CD4-positive, alpha-beta T cell (primary cell): ENCODE measurements at regions of chr5 and their contacts with region 1.

Region 1: DNA sequence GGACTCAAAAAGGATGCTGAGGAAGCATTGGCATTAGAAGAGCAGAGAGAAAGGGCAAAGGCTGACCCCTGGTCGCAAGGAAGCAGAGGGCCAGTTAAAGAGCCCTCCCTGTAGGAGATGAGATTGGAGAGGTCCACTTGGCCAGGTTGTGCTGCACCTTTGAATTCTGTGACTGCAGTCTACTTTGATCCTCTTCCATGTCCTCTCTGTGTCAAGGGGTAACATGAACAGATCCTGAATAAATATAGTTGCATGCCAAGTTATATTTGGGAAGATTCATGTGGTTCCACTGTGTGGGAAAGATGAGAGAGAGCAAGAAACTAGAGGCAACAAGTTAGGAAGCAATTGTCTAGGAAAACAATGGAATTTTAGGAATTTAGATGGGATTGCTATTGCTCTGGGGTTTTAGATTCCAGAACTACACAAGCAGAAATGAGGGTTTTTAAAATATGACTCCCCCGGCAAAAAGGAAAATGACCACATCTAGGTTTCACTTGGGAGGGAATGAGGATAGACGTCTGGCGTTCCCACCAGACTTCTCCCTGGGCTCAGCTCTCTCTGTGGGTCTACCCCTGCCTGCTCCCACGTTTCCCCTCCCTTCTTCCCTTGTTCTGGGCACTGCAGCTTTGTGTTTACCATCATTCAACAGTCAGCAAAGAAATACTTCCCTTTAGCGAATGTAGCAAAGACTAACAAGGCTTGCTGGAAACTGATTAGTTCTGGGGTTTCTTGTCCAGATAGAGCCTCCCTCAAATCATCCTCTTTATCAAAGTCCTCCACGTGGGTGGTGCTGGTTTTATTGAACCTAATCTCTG is 63.6 kb downstream of the SNX18 start:
- DNase-seq: no peak
- ATAC-seq: no peak
- H3K4me3 ChIP-seq: no peak overlapping the region
- H3K4me3 Mint-ChIP-seq: no peak overlapping the region
- H3K27ac ChIP-seq: no peak overlapping the region
- H3K27ac Mint-ChIP-seq: no peak overlapping the region
- H3K4me1 ChIP-seq: peaks cover 2% of the 10 kb centered on the region
- H3K4me1 Mint-ChIP-seq: peaks cover 4% of the 10 kb centered on the region
- H3K27me3 ChIP-seq: no peaks in the 10 kb centered on the region
- H3K27me3 Mint-ChIP-seq: no peaks in the 10 kb centered on the region
- CTCF ChIP-seq: no peak

Region 2: GRCh38 chr5:54673523-54674225 is 92.5 kb after region 1 on chr5:
- CTCF ChIA-PET with region 1: no interaction called
- POLR2A ChIA-PET with region 1: no interaction called
- intact Hi-C with region 1: loop called in 1 of 2 experiments (anchors 5 kb)
- DNase-seq: peak in 12 of 14 experiments; percentile 5 to 81 (median 40)
- ATAC-seq: peak; percentile 90
- H3K4me3 ChIP-seq: no peak overlapping the region
- H3K4me3 Mint-ChIP-seq: peak overlapping the region; percentile 2
- H3K27ac ChIP-seq: no peak overlapping the region
- H3K27ac Mint-ChIP-seq: peak overlapping the region; percentile 70
- H3K4me1 ChIP-seq: peaks cover 31% of the 10 kb centered on the region
- H3K4me1 Mint-ChIP-seq: peaks cover 57% of the 10 kb centered on the region
- H3K27me3 ChIP-seq: no peaks in the 10 kb centered on the region
- H3K27me3 Mint-ChIP-seq: no peaks in the 10 kb centered on the region
- CTCF ChIP-seq: no peak